ENCODE measurements at regions of chr7 and their contacts with region 1.

Region 1: DNA sequence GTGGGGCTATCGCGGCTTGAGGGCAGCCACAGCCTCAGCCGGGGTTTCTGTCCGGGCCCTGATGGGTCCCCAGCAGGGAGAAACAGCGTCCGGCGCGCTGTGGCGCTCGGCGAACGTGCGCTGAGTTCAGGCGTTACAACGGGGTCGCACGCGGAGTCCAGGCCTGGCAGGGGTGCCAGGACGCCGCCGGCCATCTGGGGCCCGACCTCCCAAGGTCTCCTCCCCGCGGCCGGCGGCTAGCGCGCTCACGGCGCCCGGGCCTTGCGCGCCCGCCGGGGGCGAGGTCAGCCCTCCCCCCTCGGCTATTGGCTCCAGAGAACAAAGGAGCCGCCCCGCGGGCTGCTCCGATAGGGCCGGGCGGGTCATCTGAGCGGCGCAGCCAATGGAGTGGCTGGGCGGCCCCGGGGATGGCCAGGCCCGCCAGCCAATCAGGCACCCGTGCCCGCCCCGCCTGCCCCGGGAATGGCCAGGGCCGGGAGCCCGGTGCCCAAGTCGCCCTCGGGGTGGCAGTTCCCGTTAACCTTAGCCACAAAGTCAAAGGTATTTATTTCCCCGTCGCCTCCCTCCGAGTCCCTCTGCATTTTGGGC is at the start of gene ZNF775:
- DNase-seq: peak; percentile 82 to 95 (median 91)
- ATAC-seq: peak; percentile 93
- H3K4me3 ChIP-seq: peak within 1 kb of the TSS; percentile 83 to 84
- H3K4me3 Mint-ChIP-seq: peak within 1 kb of the TSS; percentile 86
- H3K27ac ChIP-seq: peak within 1 kb of the TSS; percentile 10 to 48
- H3K27ac Mint-ChIP-seq: peak within 1 kb of the TSS; percentile 93
- H3K4me1 ChIP-seq: peaks cover 37% of the 10 kb centered on the region
- H3K4me1 Mint-ChIP-seq: peaks cover 53% of the 10 kb centered on the region
- H3K27me3 ChIP-seq: no peaks in the 10 kb centered on the region
- H3K27me3 Mint-ChIP-seq: no peaks in the 10 kb centered on the region
- CTCF ChIP-seq: no peak
- total RNA-seq, gene ZNF775: 0.33 to 0.58 TPM

Region 2: GRCh38 chr7:150322833-150323681 is 55.9 kb before region 1 on chr7 and contains the starts of genes ACTR3C and LRRC61:
- CTCF ChIA-PET with region 1: no interaction called
- POLR2A ChIA-PET with region 1: interaction called, 3 read pairs
- intact Hi-C with region 1: loop called (anchors 1 to 2 kb)
- DNase-seq: peak in 8 of 9 experiments; percentile 54 to 82 (median 66)
- ATAC-seq: peak; percentile 50
- H3K4me3 ChIP-seq: peak within 1 kb of the TSS; percentile 87 to 93
- H3K4me3 Mint-ChIP-seq: peak within 1 kb of the TSS; percentile 93
- H3K27ac ChIP-seq: peak within 1 kb of the TSS; percentile 74 to 90
- H3K27ac Mint-ChIP-seq: peak within 1 kb of the TSS; percentile 98
- H3K4me1 ChIP-seq: peaks cover 20% of the 10 kb centered on the region
- H3K4me1 Mint-ChIP-seq: peaks cover 41% of the 10 kb centered on the region
- H3K27me3 ChIP-seq: no peaks in the 10 kb centered on the region
- H3K27me3 Mint-ChIP-seq: no peaks in the 10 kb centered on the region
- CTCF ChIP-seq: no peak
- total RNA-seq, gene ACTR3C: 4.0 to 4.5 TPM
- total RNA-seq, gene LRRC61: 8.4 to 10.8 TPM

Region 3: GRCh38 chr7:150368096-150368883 is 10.7 kb before region 1 on chr7 and contains the start of gene REPIN1:
- CTCF ChIA-PET with region 1: interaction called, 5 read pairs
- POLR2A ChIA-PET with region 1: interaction called, 32 read pairs
- intact Hi-C with region 1: loop called in 1 of 2 experiments (anchors 1 kb)
- DNase-seq: peak; percentile 52 to 90 (median 85)
- ATAC-seq: no peak
- H3K4me3 ChIP-seq: peak within 1 kb of the TSS; percentile 78 to 95
- H3K4me3 Mint-ChIP-seq: peak within 1 kb of the TSS; percentile 95
- H3K27ac ChIP-seq: peak within 1 kb of the TSS; percentile 53 to 73
- H3K27ac Mint-ChIP-seq: peak within 1 kb of the TSS; percentile 95
- H3K4me1 ChIP-seq: peaks cover 47% of the 10 kb centered on the region
- H3K4me1 Mint-ChIP-seq: peaks cover 58% of the 10 kb centered on the region
- H3K27me3 ChIP-seq: no peaks in the 10 kb centered on the region
- H3K27me3 Mint-ChIP-seq: no peaks in the 10 kb centered on the region
- CTCF ChIP-seq: no peak
- total RNA-seq, gene REPIN1: 54.0 to 54.1 TPM

Region 4: DNA sequence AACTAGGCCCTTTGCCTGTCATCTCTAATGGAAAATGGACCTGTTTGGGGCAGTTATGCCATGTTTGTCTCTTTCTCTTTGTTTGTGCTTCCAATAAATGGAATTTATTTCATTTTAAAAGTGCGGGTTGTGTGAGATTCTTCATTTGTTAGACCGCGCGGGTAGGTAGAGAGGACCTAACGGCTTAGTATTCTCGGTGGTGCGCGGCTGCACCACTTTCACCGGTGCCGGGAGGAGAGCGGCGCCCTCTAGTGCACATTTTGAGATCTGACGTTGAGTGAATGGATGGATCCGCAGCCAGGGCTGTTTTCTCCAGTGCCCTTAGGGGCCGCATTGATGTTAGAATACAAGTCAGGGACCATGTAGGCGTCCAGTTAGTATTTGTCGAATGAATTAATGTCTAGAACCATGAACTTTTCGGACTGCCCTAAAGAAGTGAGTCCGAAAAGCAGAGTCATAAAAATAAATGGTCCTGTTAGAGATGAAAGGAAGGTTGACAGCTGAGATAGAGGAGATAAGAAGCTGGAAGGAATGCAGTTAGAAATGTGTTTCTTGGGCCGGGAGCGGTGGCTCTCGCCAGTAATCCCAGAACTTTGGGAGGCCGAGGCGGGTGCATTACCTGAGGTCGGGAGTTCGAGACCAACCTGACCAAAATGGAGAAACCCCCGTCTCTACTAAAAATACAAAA is 42.2 kb after region 1 on chr7:
- CTCF ChIA-PET with region 1: interaction called, 6 read pairs
- POLR2A ChIA-PET with region 1: no interaction called
- intact Hi-C with region 1: loop called (anchors 1 kb)
- DNase-seq: peak; percentile 75 to 93 (median 88)
- ATAC-seq: peak; percentile 99
- H3K4me3 ChIP-seq: no peak overlapping the region
- H3K4me3 Mint-ChIP-seq: no peak overlapping the region
- H3K27ac ChIP-seq: no peak overlapping the region
- H3K27ac Mint-ChIP-seq: no peak overlapping the region
- H3K4me1 ChIP-seq: peaks cover 4% of the 10 kb centered on the region
- H3K4me1 Mint-ChIP-seq: peaks cover 5% of the 10 kb centered on the region
- H3K27me3 ChIP-seq: no peaks in the 10 kb centered on the region
- H3K27me3 Mint-ChIP-seq: no peaks in the 10 kb centered on the region
- CTCF ChIP-seq: peak; percentile 91

Region 5: DNA sequence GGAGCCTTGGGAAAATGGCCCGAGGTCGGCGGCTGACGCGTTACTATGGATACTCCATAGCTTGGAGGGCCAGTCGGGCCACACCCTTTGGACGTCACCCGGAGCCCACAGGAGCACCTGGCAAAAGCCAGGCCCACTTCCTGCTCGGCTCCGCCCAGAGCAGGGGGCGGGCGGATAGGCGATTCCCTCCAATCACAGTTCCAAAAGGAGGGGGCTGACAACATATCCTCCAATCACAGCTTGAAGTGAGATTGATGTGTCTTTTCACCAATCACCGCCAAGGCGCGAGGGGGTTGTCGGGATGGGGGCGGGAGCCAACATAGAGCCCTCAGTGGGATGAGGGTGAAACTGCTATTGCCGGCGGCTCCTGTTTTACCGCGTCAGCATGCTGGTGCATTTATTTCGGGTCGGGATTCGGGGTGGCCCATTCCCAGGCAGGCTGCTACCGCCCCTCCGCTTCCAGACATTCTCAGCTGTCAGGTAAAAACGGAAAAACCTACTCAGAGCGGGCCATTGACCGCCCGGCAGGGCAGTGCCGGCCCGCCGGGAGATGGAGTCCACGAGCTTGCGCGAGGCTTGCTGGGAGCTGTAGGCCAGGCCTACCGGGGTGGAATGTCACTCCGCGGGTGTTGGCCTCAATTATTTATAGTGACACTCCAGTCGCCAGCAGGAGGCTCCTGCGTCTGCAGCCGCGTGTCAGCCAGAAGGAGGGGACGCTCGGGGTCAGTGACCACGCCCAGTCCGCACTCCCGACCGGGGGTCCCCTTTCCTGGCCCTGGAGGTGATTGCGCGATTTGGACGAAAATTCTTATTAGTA is 649.4 kb after region 1 on chr7 and contains the start of gene ABCB8:
- CTCF ChIA-PET with region 1: no interaction called
- POLR2A ChIA-PET with region 1: no interaction called
- intact Hi-C with region 1: loop called in 1 of 2 experiments (anchors 1 kb)
- DNase-seq: peak; percentile 93 to 99 (median 98)
- ATAC-seq: peak; percentile 92
- H3K4me3 ChIP-seq: peak within 1 kb of the TSS; percentile 67 to 75
- H3K4me3 Mint-ChIP-seq: peak within 1 kb of the TSS; percentile 96
- H3K27ac ChIP-seq: peak within 1 kb of the TSS; percentile 94 to 96
- H3K27ac Mint-ChIP-seq: peak within 1 kb of the TSS; percentile 99
- H3K4me1 ChIP-seq: peaks cover 12% of the 10 kb centered on the region
- H3K4me1 Mint-ChIP-seq: peaks cover 24% of the 10 kb centered on the region
- H3K27me3 ChIP-seq: no peaks in the 10 kb centered on the region
- H3K27me3 Mint-ChIP-seq: no peaks in the 10 kb centered on the region
- CTCF ChIP-seq: peak; percentile 35
- total RNA-seq, gene ABCB8: 43.6 to 49.3 TPM